ENCODE measurements at regions of chr7 and their contacts with region 1.

Region 1: DNA sequence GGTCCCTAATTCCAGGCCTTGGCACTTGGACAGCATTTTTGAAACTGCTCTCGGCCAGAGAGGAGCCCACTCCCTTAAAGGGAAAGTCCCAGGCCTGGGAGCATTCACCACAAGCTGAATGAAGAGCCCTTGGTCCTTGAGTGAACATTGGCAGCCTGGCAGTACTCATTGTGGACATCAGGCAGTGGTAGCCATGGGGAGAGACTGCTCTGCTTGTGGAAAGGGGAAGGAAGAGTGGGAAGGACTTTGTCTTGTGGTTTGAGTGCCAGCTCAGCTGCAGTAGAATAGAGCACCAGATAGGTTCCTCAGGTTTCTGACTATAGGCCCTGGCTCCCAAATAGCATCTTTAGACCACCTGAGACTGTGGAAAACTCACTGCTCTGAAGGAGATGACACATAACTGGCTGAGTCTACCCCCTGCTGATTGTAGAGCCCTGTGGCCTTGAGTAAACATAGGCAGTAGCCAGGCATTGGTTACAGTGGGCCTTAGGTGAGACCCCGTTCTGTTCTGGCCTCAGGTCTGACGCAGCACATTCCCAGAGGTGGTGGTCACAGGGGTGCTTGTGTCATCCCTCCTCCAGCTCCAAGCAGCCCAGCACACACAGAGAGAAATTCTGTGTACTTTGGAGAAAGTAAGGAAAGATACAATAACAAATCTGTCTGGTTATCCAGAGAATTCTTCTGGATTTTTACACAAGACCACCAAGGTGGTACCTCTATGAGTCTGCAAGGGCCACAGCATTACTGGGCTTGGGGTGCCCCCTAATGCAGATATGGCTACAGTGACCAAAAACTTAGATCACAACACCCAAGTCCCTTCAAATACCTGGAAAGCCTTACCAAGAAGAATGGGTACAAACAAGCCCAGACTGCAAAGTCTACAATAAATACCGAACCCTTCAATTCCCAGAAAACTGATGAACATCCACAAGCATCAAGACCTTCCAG is 153.8 kb downstream of the GNAI1 start:
- DNase-seq: peak in 5 of 10 donors; percentile 28 to 85 (median 49)

Region 2: GRCh38 chr7:79063019-79063698 is 1225.3 kb before region 1 on chr7:
- intact Hi-C with region 1: no loop called
- DNase-seq: no peak

Region 3: GRCh38 chr7:80060218-80060806 is 228.1 kb before region 1 on chr7:
- intact Hi-C with region 1: loop called (anchors 2 kb)
- DNase-seq: no peak

Region 4: DNA sequence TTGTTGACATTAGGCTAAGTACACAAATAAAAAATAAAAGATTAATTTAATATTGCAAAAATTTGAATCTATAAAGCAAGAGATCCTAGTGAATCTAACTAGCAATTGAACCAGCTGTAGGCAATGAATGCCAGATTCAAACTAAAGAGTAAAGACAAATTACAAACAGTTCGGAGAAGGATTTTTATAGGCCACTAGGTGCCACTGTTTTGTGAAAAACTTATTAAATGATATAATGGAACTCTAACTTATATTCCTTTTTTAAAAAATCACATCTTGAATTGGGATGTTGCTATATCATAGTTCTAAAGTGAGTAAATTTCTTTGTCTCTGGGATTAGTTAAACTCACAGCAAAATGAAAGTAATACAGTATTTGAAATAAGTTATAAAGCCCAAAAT is 192.9 kb before region 1 on chr7:
- intact Hi-C with region 1: loop called (anchors 10 kb)
- DNase-seq: no peak

Region 5: DNA sequence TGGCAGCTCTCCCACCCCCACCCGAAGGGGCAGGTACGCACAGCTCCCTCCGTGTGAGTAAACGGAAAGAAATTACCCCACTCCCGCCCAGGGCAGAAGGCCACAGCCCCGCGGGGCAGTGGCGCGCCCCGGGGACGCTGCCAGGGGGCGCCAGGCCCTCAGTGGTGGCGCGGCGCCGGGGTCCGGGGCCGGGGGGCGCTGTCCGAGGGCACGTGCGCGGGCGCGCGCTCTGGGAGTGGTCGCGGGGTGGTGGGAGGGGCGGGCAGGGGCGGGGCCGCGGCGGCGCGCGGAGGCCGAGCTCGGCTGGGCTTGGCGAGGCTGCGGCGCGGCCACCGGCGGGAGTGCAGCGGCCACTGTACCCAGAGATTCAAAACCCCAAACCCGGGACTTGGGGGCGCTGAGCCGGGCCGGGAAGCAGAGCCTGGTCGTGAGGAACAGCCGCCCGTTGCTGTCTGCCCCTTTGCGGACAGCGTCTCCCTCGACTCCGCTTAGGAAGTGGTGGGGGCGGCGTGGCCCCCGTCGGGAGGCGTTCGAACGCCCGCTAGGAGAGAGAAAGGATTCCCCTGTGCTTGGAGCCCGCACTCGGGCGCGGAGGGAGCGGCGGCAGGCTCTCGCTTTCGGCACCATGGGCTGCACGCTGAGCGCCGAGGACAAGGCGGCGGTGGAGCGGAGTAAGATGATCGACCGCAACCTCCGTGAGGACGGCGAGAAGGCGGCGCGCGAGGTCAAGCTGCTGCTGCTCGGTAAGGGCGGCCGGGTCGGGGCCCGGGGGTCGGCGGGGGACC is 153.7 kb before region 1 on chr7 and contains the start of gene GNAI1:
- intact Hi-C with region 1: loop called (anchors 2 kb)
- DNase-seq: peak; percentile 49 to 95 (median 64)

Region 6: DNA sequence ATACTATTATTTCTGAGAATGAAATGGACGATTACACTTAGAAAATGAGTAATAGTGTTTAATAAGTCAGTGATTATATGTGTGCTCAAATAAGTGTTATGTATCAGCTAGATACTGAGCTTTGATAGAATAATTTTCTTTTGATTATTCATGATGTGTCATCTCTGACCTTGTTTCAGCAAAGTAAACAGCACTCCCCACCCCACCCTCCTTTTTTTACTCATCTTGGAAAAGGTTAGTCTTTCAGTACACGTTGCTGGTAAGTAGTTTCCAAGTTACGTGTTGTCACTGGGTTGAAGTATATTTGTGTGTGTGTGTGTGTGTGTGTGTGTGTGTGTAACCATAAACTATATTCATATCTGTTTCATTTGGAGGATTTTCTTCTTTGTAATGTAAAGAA is 69.7 kb before region 1 on chr7:
- intact Hi-C with region 1: no loop called
- DNase-seq: no peak

Measured in posterior cingulate gyrus (tissue), 11 donors.